MCF 10A (cell line): ENCODE measurements at regions of chr19 and their contacts with region 1.

Region 1: GRCh38 chr19:51799034-51799773 is 4.2 kb downstream of the FPR3 start:
- DNase-seq: peak; percentile 93
- H3K4me3 Mint-ChIP-seq: peak overlapping the region; percentile 2
- H3K27ac Mint-ChIP-seq: peak overlapping the region; percentile 43
- H3K4me1 Mint-ChIP-seq: peaks cover 16% of the 10 kb centered on the region
- H3K27me3 Mint-ChIP-seq: no peaks in the 10 kb centered on the region
- CTCF ChIP-seq: no peak

Region 2: DNA sequence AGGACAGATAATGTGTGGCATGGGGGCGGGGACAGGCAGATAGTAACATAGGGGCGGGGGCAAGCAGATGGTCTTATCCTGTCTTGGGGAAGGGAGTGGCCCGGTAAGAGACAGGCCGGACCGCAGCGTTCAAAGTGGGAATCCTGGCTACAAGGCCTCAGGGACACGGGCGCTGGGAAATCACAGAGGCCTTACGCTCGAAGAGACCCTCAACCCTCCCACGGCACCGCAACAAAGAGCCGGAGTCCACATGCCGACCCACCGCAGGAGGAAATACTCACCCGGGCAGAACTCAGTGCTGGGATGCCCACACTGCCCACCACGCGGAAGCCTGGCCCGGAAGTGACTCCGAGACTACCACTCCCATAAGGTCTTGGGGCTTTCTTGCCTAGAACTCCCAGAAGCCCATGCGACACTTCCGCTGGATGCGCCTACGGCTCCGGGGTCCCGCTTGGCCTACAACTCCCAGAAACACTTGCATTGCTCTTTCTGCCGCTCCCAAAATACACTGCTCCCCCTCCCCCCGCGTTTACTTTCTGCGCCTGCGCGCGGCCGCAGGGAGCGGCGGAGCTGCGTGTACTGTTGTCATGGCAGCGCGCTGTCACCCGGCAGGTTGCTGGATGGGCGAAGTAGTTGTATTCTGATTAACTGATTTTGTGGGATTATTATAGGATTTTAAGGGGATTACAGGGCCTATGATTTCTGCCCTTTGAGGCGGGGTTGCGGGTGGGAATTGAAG is 691.0 kb before region 1 on chr19 and contains the start of gene CTU1:
- CTCF ChIA-PET with region 1: no interaction called
- POLR2A ChIA-PET with region 1: no interaction called
- intact Hi-C with region 1: loop called (anchors 10 kb)
- DNase-seq: peak; percentile 99
- H3K4me3 Mint-ChIP-seq: peak within 1 kb of the TSS; percentile 77
- H3K27ac Mint-ChIP-seq: peak within 1 kb of the TSS; percentile 89
- H3K4me1 Mint-ChIP-seq: peaks cover 21% of the 10 kb centered on the region
- H3K27me3 Mint-ChIP-seq: no peaks in the 10 kb centered on the region
- CTCF ChIP-seq: no peak
- total RNA-seq, gene CTU1: 9.9 and 12.7 TPM in 2 replicates